ENCODE measurements at regions of chr9 and their contacts with region 1.

Region 1: GRCh38 chr9:14011799-14012560 is 302.0 kb downstream of the NFIB start:
- DNase-seq: no peak
- ATAC-seq: no peak
- H3K4me3 ChIP-seq: no peak overlapping the region
- H3K4me3 Mint-ChIP-seq: no peak overlapping the region
- H3K27ac ChIP-seq: no peak overlapping the region
- H3K27ac Mint-ChIP-seq: no peak overlapping the region
- H3K4me1 ChIP-seq: no peaks in the 10 kb centered on the region
- H3K4me1 Mint-ChIP-seq: no peaks in the 10 kb centered on the region
- H3K27me3 ChIP-seq: no peaks in the 10 kb centered on the region
- H3K27me3 Mint-ChIP-seq: no peaks in the 10 kb centered on the region
- CTCF ChIP-seq: no peak

Region 2: DNA sequence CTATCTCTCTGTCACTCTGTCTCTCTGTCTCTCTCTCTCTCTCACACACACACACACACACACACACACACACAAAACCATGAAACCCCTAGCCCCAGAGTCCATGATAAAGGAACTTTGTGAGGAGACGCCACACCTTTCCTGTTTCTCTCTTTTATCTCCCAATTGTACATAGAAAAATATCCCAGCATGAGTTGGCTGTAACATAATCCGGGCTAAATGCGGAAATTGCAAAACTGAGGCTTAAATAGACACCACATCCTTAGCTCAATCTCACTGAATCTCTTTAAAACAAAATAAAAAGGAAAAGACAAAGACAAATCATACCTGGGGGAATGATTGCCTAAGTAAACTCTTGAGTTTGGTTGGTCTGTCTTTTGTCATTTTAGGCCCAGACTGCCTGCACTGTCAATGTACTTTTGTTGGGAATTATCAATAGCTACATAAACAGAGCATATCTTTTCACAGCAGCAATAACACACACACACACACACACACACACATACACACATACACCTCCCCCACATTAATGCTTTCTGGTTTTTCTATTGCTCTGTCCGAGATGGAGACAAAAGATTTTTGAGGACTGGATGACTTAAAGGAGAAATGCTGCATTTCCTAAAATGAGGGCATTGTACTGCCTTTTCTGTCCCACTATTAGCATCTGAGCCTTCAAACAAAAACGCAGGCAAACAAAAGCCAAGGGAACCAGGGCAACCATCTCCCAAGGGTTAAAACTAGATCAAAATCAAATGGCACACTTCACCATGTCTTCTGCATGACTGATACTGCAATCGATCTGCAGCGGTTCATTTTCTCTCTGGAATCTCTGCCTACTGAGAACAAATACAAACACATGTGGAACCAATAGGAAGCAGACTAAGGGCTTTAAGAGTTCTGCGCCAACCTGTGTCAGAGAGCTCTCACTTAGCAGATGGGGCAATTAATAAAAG is 19.6 kb before region 1 on chr9:
- CTCF ChIA-PET with region 1: no interaction called
- POLR2A ChIA-PET with region 1: no interaction called
- intact Hi-C with region 1: loop called in 1 of 2 experiments (anchors 2 kb)
- DNase-seq: no peak
- ATAC-seq: no peak
- H3K4me3 ChIP-seq: no peak overlapping the region
- H3K4me3 Mint-ChIP-seq: no peak overlapping the region
- H3K27ac ChIP-seq: no peak overlapping the region
- H3K27ac Mint-ChIP-seq: no peak overlapping the region
- H3K4me1 ChIP-seq: no peaks in the 10 kb centered on the region
- H3K4me1 Mint-ChIP-seq: no peaks in the 10 kb centered on the region
- H3K27me3 ChIP-seq: no peaks in the 10 kb centered on the region
- H3K27me3 Mint-ChIP-seq: no peaks in the 10 kb centered on the region
- CTCF ChIP-seq: no peak

Region 3: DNA sequence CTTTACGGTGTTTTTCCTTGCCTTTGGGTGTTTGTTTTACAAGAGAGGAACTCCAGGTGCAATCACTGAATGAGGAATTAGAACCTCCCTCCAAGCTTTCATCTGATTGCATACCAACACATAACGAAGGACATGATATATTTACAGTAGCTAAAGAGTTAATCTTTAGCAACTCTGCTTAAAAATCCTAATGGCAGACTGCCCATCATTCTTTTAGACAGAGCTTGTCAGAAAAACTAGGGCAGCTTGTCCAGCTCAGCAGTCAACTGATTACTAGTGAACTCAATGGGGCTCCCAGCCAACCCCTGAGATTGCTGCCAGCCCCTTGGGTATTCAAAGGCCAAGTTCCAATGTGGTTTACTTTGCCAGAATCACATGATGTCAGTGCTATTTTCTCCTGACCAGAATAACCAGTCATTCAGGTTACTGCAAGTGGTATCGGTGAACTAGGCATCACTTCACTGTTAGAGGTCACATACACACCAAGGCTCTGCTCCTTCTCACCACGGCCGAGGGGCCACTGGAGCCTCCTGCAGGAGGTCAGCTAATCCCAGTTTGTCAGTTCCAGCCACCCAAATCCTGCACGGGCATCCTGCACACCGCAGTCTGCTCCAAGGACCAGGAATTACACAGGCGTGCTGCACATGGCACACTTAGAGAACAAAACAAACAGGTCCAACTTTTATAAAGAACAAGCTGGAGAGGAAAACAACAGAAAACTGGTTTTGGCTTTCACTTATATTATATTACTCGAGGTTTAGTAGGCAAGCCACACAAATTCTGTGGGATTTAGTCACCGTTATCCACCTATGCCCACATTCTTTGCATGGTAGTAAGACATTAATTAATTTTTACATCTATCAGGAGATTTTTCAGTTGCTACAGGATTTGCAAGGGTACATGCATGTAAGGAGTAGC is 239.4 kb after region 1 on chr9:
- CTCF ChIA-PET with region 1: no interaction called
- POLR2A ChIA-PET with region 1: no interaction called
- intact Hi-C with region 1: no loop called
- DNase-seq: no peak
- ATAC-seq: no peak
- H3K4me3 ChIP-seq: no peak overlapping the region
- H3K4me3 Mint-ChIP-seq: no peak overlapping the region
- H3K27ac ChIP-seq: no peak overlapping the region
- H3K27ac Mint-ChIP-seq: no peak overlapping the region
- H3K4me1 ChIP-seq: no peaks in the 10 kb centered on the region
- H3K4me1 Mint-ChIP-seq: no peaks in the 10 kb centered on the region
- H3K27me3 ChIP-seq: peaks cover 5% of the 10 kb centered on the region in 2 experiments
- H3K27me3 Mint-ChIP-seq: peaks cover 17% of the 10 kb centered on the region
- CTCF ChIP-seq: no peak